ENCODE measurements at regions of chr15 and their contacts with region 1.

Region 1: DNA sequence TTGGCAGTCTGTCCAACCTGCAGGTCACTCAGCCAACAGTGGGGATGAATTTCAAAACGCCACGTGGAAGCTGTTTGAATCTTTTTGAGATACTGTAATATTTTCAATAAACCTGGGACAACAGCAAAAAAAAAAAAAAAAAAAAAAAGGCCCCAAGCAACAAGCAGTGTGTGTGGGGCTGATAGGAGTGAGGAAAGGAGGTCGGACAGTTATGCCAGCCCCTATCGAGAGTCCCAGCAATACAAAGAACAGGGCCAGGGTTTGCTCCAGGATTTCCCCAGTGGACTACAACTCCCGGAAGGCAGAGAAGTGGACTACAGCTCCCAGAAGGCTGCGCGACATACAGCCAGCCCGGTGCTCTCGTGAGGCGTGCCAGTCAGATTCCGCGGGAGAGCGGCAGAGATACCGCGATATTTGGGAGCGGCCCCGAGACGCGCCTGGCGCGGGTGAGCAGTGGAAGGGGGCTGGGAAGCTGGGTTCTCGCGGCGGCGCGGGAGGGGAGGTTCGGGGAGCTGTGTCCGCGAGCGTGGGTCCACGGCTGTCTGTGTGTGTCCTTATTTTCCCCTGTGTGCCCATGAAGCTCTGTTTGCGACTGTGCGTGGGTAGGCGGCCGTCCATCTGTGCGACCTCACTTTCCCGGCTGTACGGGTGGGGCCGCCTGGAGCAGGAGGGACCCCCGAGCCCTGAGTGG is at the start of gene PPCDC:
- DNase-seq: peak; percentile 81
- ATAC-seq: peak; percentile 100
- H3K4me3 ChIP-seq: peak within 1 kb of the TSS; percentile 67 to 93
- H3K27ac ChIP-seq: peak within 1 kb of the TSS; percentile 96
- H3K4me1 ChIP-seq: no peaks in the 10 kb centered on the region
- H3K27me3 ChIP-seq: no peaks in the 10 kb centered on the region
- CTCF ChIP-seq: no peak
- total RNA-seq, gene PPCDC: 26.1 TPM

Region 2: DNA sequence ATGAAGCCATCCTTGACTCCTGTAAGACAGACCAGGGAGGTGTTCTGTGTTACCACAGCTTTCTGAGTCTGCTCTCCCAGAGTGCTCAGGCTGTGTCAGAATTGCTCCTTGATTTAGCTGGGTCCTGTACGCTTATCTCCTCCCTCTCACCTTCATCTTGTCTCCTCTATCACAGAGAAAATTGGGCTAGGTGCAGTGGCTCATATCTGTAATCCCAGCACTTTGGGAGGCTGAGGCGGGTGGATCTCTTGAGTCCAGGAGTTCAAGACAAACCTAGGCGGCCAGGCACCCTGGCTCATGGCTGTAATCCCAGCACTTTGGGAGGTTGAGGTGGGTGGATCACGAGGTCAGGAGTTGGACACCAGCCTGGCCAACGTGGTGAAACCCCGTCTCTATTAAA is 22.0 kb before region 1 on chr15:
- CTCF ChIA-PET with region 1: no interaction called
- POLR2A ChIA-PET with region 1: interaction called, 14 read pairs
- in situ Hi-C with region 1: no loop called
- intact Hi-C with region 1: no loop called
- DNase-seq: no peak
- ATAC-seq: no peak
- H3K4me3 ChIP-seq: no peak overlapping the region
- H3K27ac ChIP-seq: no peak overlapping the region
- H3K4me1 ChIP-seq: no peaks in the 10 kb centered on the region; the same call in 1 of the 2 replicates
- H3K27me3 ChIP-seq: no peaks in the 10 kb centered on the region
- CTCF ChIP-seq: no peak

Region 3: DNA sequence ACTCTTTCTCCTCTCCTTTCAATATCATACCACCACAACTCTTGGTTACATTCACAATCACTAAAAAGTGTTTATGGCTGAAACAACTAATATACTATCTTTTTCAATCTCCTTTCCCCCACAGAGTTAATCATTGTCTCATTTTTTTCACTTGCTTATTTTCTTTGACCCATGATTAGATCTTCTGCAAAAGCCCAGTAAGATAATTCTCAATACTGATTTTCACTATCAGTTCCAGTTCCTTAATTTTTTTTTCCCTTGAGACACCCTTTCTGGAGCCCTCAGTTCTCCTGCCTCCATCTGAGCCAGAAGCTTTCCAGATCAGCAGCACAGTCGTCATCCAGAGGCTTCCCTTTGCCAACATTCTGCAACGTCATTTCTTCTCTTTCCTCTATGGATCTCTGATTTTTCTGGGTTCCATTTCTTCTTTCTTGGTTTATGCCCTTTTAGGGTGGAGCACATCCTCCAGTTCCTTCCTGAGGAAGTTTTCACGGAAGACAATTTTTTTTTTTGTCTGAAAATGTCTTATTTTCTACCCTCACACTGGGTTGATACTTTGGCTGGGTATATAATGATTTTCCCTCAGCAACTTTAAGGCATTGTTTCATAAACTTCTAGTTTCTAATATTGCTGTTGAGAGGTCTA is 89.6 kb after region 1 on chr15:
- CTCF ChIA-PET with region 1: no interaction called
- POLR2A ChIA-PET with region 1: interaction called, 14 read pairs
- in situ Hi-C with region 1: no loop called
- intact Hi-C with region 1: no loop called
- DNase-seq: no peak
- ATAC-seq: no peak
- H3K4me3 ChIP-seq: no peak overlapping the region
- H3K27ac ChIP-seq: no peak overlapping the region
- H3K4me1 ChIP-seq: no peaks in the 10 kb centered on the region
- H3K27me3 ChIP-seq: no peaks in the 10 kb centered on the region
- CTCF ChIP-seq: no peak

Region 4: GRCh38 chr15:75217012-75217411 is 193.7 kb after region 1 on chr15:
- CTCF ChIA-PET with region 1: no interaction called
- POLR2A ChIA-PET with region 1: interaction called, 16 read pairs
- in situ Hi-C with region 1: no loop called
- intact Hi-C with region 1: no loop called
- DNase-seq: no peak
- ATAC-seq: no peak
- H3K4me3 ChIP-seq: no peak overlapping the region
- H3K27ac ChIP-seq: no peak overlapping the region
- H3K4me1 ChIP-seq: no peaks in the 10 kb centered on the region
- H3K27me3 ChIP-seq: no peaks in the 10 kb centered on the region
- CTCF ChIP-seq: no peak

Region 5: GRCh38 chr15:75817138-75817935 is 794.0 kb after region 1 on chr15:
- CTCF ChIA-PET with region 1: no interaction called
- POLR2A ChIA-PET with region 1: no interaction called
- in situ Hi-C with region 1: no loop called
- intact Hi-C with region 1: no loop called
- DNase-seq: no peak
- ATAC-seq: no peak
- H3K4me3 ChIP-seq: peak overlapping the region; percentile 6 to 14; a peak in 1 of 4 replicates
- H3K27ac ChIP-seq: no peak overlapping the region
- H3K4me1 ChIP-seq: no peaks in the 10 kb centered on the region
- H3K27me3 ChIP-seq: no peaks in the 10 kb centered on the region
- CTCF ChIP-seq: no peak